ENCODE measurements at regions of chr9 and their contacts with region 1.

Region 1: GRCh38 chr9:33721674-33722358 is 73.5 kb upstream of the PRSS3 start:
- DNase-seq: peak; percentile 84
- H3K4me3 ChIP-seq: no peak overlapping the region
- H3K27ac ChIP-seq: no peak overlapping the region
- H3K4me1 ChIP-seq: peaks cover 13% of the 10 kb centered on the region
- H3K27me3 ChIP-seq: peaks cover 0 to 4% of the 10 kb centered on the region in 2 experiments
- CTCF ChIP-seq: peak; percentile 100
- POLR2A ChIP-seq: no peak

Region 2: DNA sequence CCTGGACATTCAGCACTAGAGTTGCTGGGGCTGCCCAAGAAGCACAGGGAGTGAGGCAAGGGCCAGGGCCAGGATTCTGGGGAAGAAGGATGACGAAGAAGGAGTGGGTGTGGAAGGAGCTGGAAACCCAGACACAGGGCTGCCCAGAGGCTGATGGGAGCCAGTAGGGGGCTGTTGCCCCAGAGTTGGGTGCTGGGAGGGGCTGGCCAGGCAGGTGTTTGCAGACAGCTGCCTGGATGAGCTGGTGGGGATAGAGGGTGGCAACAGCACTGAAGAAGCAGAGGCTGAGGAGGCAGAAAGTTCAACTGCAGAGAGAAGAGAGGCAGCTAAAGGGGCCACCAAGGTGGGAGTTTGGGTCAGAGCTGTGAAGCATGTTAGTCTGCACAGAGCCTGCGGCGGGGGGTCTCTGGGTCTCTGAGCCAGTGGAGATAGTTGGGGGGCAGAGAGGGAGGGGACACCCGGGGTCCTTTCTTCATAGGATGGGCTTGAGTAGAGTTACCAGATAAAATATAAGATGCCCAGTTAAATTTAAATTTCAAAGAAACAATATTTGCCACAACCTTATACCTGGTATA is 316.9 kb before region 1 on chr9:
- CTCF ChIA-PET with region 1: no interaction called
- POLR2A ChIA-PET with region 1: no interaction called
- dilution Hi-C with region 1: no loop called
- intact Hi-C with region 1: loop called (anchors 10 kb)
- DNase-seq: no peak
- H3K4me3 ChIP-seq: no peak overlapping the region
- H3K27ac ChIP-seq: no peak overlapping the region
- H3K4me1 ChIP-seq: no peaks in the 10 kb centered on the region
- H3K27me3 ChIP-seq: no peaks in the 10 kb centered on the region
- CTCF ChIP-seq: no peak
- POLR2A ChIP-seq: no peak

Region 3: DNA sequence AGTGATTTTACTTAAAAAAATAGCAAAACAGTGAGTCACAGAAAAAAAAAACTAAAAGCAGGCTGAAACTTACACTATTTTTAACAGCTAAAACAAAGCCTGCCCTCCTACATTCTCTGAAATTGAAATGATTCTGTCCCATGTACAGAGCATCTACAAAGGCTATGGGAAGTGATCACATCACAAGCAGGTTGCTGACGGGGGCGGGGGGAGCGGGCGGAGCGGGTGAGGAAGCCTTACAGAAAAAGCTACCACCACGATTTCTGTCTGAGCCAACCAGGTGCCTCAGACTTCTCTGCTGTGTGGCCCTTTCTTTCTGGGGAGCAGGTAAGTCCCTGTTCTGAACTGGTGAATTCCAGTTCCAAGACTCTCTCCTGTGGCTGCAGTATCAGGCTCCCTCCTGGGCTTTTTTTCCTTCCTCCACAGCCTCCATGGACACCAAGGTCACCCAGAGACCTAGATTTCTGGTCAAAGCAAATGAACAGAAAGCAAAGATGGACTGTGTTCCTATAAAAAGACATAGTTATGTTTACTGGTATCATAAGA is 92.9 kb before region 1 on chr9:
- CTCF ChIA-PET with region 1: interaction called, 561 read pairs
- POLR2A ChIA-PET with region 1: no interaction called
- dilution Hi-C with region 1: no loop called
- intact Hi-C with region 1: loop called (anchors 1 kb)
- DNase-seq: no peak
- H3K4me3 ChIP-seq: no peak overlapping the region
- H3K27ac ChIP-seq: no peak overlapping the region
- H3K4me1 ChIP-seq: no peaks in the 10 kb centered on the region
- H3K27me3 ChIP-seq: peaks cover 15 to 35% of the 10 kb centered on the region in 2 experiments
- CTCF ChIP-seq: no peak
- POLR2A ChIP-seq: no peak

Region 4: GRCh38 chr9:33676746-33677505 is 44.9 kb before region 1 on chr9:
- CTCF ChIA-PET with region 1: interaction called, 3 read pairs
- POLR2A ChIA-PET with region 1: no interaction called
- dilution Hi-C with region 1: no loop called
- intact Hi-C with region 1: loop called (anchors 5 kb)
- DNase-seq: peak; percentile 24
- H3K4me3 ChIP-seq: peak overlapping the region; percentile 26 to 34 (median 32)
- H3K27ac ChIP-seq: no peak overlapping the region
- H3K4me1 ChIP-seq: peaks cover 3% of the 10 kb centered on the region
- H3K27me3 ChIP-seq: peaks cover 16 to 57% of the 10 kb centered on the region in 2 experiments
- CTCF ChIP-seq: no peak
- POLR2A ChIP-seq: no peak

Region 5: GRCh38 chr9:33785913-33786312 is 64.1 kb after region 1 on chr9:
- CTCF ChIA-PET with region 1: no interaction called
- POLR2A ChIA-PET with region 1: no interaction called
- dilution Hi-C with region 1: no loop called
- intact Hi-C with region 1: no loop called
- DNase-seq: no peak
- H3K4me3 ChIP-seq: no peak overlapping the region
- H3K27ac ChIP-seq: no peak overlapping the region
- H3K4me1 ChIP-seq: peaks cover under 1% of the 10 kb centered on the region
- H3K27me3 ChIP-seq: no peaks in the 10 kb centered on the region
- CTCF ChIP-seq: peak in 1 of 2 donors; percentile 13
- POLR2A ChIP-seq: no peak

Measured in endothelial cell of umbilical vein (primary cell).